Adrenal gland (tissue), 19 donors: ENCODE measurements at regions of chr11 and their contacts with region 1.

Region 1: GRCh38 chr11:62169935-62170548 is 20.0 kb upstream of the SCGB1D1 start:
- DNase-seq: no peak
- H3K4me3 ChIP-seq: no peak overlapping the region
- H3K27ac ChIP-seq: no peak overlapping the region
- H3K4me1 ChIP-seq: peaks cover 0 to 5% of the 10 kb centered on the region in 2 donors
- H3K27me3 ChIP-seq: no peaks in the 10 kb centered on the region
- CTCF ChIP-seq: no peak
- POLR2A ChIP-seq: no peak

Region 2: GRCh38 chr11:62025487-62026105 is 144.4 kb before region 1 on chr11:
- intact Hi-C with region 1: no loop called
- DNase-seq: peak; percentile 45 to 79 (median 68)
- H3K4me3 ChIP-seq: no peak overlapping the region
- H3K27ac ChIP-seq: peak overlapping the region in 4 of 5 donors; percentile 28 to 66 (median 56)
- H3K4me1 ChIP-seq: no peaks in the 10 kb centered on the region
- H3K27me3 ChIP-seq: no peaks in the 10 kb centered on the region
- CTCF ChIP-seq: no peak
- POLR2A ChIP-seq: no peak

Region 3: GRCh38 chr11:62088331-62088933 is 81.6 kb before region 1 on chr11:
- intact Hi-C with region 1: no loop called
- DNase-seq: no peak
- H3K4me3 ChIP-seq: no peak overlapping the region
- H3K27ac ChIP-seq: no peak overlapping the region
- H3K4me1 ChIP-seq: no peaks in the 10 kb centered on the region
- H3K27me3 ChIP-seq: no peaks in the 10 kb centered on the region
- CTCF ChIP-seq: no peak
- POLR2A ChIP-seq: no peak

Region 4: DNA sequence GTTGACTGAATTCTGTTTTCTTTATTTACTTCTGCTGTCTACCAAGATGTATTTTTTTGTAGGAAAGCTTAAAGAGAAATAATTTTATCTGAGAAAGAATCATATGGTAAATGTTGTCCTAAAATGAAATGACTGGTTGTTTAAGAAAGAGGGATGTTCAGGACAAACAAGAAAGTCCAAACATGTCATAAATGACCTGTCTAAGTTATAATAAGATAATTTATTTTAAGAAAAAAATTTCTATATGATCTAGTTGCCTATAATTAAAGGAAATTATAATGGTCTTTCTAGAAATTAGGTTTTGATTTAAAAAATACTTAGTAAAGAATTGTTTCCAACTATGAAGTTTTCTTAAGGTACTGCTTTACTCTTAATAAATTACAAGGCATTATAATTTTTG is 110.4 kb after region 1 on chr11:
- intact Hi-C with region 1: no loop called
- DNase-seq: no peak
- H3K4me3 ChIP-seq: no peak overlapping the region
- H3K27ac ChIP-seq: no peak overlapping the region
- H3K4me1 ChIP-seq: no peaks in the 10 kb centered on the region
- H3K27me3 ChIP-seq: no peaks in the 10 kb centered on the region
- CTCF ChIP-seq: no peak
- POLR2A ChIP-seq: no peak

Region 5: GRCh38 chr11:62315431-62315830 is 145.4 kb after region 1 on chr11:
- intact Hi-C with region 1: loop called in 1 of 2 experiments (anchors 10 kb)
- DNase-seq: no peak
- H3K4me3 ChIP-seq: no peak overlapping the region
- H3K27ac ChIP-seq: no peak overlapping the region
- H3K4me1 ChIP-seq: no peaks in the 10 kb centered on the region
- H3K27me3 ChIP-seq: no peaks in the 10 kb centered on the region
- CTCF ChIP-seq: no peak
- POLR2A ChIP-seq: no peak